CD8-positive, alpha-beta T cell (primary cell): ENCODE measurements at regions of chr2 and their contacts with region 1.

Region 1: DNA sequence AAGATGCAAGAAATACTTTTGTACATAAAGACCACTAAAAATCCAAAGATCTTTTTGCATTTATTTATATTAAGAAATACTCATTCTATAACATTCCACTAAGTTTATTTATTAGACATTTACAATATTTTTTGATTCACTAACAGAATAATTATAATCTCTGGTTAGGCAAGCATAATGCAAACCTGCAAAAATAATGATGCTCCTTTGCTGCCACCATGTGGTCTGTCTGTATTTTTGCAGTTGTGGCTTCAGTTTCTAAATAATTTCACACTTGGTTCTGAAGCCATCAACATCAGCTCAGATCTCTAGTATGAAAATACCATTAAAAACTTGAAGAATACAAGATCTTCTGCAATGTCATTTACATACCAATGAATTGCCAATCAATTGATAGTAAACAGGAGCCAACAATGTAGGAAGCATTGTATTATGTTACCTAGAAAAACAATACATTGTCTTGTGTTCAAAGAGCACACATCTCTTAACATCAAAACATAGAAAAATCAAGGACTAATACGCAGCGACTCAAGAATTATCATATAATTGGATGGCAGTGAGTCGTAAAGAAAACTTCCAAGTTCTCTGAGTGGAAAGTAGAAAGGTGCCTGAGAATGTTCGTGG is 28.8 kb upstream of the WDR75 start:
- DNase-seq: peak in 7 of 9 experiments; percentile 29 to 68 (median 52)
- ATAC-seq: no peak
- H3K4me3 ChIP-seq: no peak overlapping the region
- H3K4me3 Mint-ChIP-seq: no peak overlapping the region
- H3K27ac ChIP-seq: no peak overlapping the region
- H3K27ac Mint-ChIP-seq: no peak overlapping the region
- H3K4me1 ChIP-seq: peaks cover 4% of the 10 kb centered on the region
- H3K4me1 Mint-ChIP-seq: peaks cover 7% of the 10 kb centered on the region
- H3K27me3 ChIP-seq: no peaks in the 10 kb centered on the region
- H3K27me3 Mint-ChIP-seq: no peaks in the 10 kb centered on the region
- CTCF ChIP-seq: peak; percentile 86

Region 2: GRCh38 chr2:187581125-187581896 is 1831.1 kb before region 1 on chr2:
- CTCF ChIA-PET with region 1: no interaction called
- POLR2A ChIA-PET with region 1: no interaction called
- intact Hi-C with region 1: loop called (anchors 5 kb)
- DNase-seq: peak in 3 of 9 experiments; percentile 6 to 34 (median 10)
- ATAC-seq: no peak
- H3K4me3 ChIP-seq: no peak overlapping the region
- H3K4me3 Mint-ChIP-seq: no peak overlapping the region
- H3K27ac ChIP-seq: no peak overlapping the region
- H3K27ac Mint-ChIP-seq: no peak overlapping the region
- H3K4me1 ChIP-seq: no peaks in the 10 kb centered on the region
- H3K4me1 Mint-ChIP-seq: peaks cover 5% of the 10 kb centered on the region
- H3K27me3 ChIP-seq: no peaks in the 10 kb centered on the region
- H3K27me3 Mint-ChIP-seq: no peaks in the 10 kb centered on the region
- CTCF ChIP-seq: peak; percentile 26

Region 3: GRCh38 chr2:188524519-188525113 is 887.8 kb before region 1 on chr2:
- CTCF ChIA-PET with region 1: interaction called, 6 read pairs
- POLR2A ChIA-PET with region 1: no interaction called
- intact Hi-C with region 1: loop called (anchors 2 kb)
- DNase-seq: peak in 2 of 9 experiments; percentile 27 to 37
- ATAC-seq: peak; percentile 48
- H3K4me3 ChIP-seq: no peak overlapping the region
- H3K4me3 Mint-ChIP-seq: no peak overlapping the region
- H3K27ac ChIP-seq: no peak overlapping the region
- H3K27ac Mint-ChIP-seq: no peak overlapping the region
- H3K4me1 ChIP-seq: no peaks in the 10 kb centered on the region
- H3K4me1 Mint-ChIP-seq: no peaks in the 10 kb centered on the region
- H3K27me3 ChIP-seq: no peaks in the 10 kb centered on the region
- H3K27me3 Mint-ChIP-seq: no peaks in the 10 kb centered on the region
- CTCF ChIP-seq: peak; percentile 63

Region 4: DNA sequence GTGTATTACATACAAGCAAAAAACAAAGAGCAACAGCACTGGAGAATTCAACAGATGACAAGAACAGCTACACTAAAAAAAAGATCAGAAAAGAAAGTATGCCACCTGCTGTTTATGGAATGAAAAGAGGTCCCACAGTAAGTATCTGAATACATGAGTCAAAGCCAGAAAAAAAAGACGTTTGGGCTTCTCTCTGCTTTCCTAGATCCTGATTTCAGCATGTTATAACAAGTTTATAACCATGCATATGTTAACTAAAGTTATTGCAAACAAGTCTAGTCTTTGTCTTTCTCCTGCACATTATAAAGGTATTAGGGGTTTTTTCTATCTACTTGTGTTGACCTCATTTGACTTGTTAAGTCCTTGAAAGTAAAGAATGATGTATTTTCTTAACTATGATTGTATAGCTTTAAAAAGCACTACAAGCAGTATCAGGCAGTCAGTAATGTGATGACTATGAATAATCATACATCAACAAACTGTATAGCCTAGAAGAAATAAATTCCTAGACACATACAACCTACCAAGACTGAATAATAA is 124.4 kb before region 1 on chr2:
- CTCF ChIA-PET with region 1: interaction called, 4 read pairs
- POLR2A ChIA-PET with region 1: no interaction called
- intact Hi-C with region 1: loop called in 1 of 2 experiments (anchors 5 kb)
- DNase-seq: peak in 2 of 9 experiments; percentile 33 to 40
- ATAC-seq: no peak
- H3K4me3 ChIP-seq: no peak overlapping the region
- H3K4me3 Mint-ChIP-seq: no peak overlapping the region
- H3K27ac ChIP-seq: no peak overlapping the region
- H3K27ac Mint-ChIP-seq: no peak overlapping the region
- H3K4me1 ChIP-seq: peaks cover 4% of the 10 kb centered on the region
- H3K4me1 Mint-ChIP-seq: peaks cover 11% of the 10 kb centered on the region
- H3K27me3 ChIP-seq: no peaks in the 10 kb centered on the region
- H3K27me3 Mint-ChIP-seq: no peaks in the 10 kb centered on the region
- CTCF ChIP-seq: peak; percentile 41